ENCODE measurements at regions of chr16 and their contacts with region 1.

Region 1: DNA sequence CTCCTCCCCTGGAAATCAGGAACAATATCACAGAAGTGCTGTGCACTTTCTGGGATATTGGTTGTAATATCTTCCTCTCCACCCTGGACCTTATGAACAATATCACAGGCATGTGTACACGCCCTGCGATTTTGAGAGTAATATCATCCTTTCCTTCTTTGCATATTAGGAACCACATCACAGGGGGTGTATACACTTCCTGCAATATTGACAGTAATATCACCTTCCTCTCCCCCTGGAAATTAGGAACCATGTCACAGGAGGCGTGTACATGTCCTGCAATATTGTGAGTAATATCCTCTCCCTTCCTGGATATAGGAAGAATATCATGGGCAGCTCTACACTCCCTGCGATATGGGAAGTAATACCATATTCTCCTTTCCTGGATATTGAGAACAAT is 14.2 kb upstream of the TEKT5 start:
- DNase-seq: no peak
- H3K4me3 ChIP-seq: no peak overlapping the region
- H3K27ac ChIP-seq: no peak overlapping the region
- H3K4me1 ChIP-seq: no peaks in the 10 kb centered on the region
- H3K27me3 ChIP-seq: no peaks in the 10 kb centered on the region
- CTCF ChIP-seq: no peak
- EP300 ChIP-seq: no peak
- POLR2A ChIP-seq: no peak

Region 2: DNA sequence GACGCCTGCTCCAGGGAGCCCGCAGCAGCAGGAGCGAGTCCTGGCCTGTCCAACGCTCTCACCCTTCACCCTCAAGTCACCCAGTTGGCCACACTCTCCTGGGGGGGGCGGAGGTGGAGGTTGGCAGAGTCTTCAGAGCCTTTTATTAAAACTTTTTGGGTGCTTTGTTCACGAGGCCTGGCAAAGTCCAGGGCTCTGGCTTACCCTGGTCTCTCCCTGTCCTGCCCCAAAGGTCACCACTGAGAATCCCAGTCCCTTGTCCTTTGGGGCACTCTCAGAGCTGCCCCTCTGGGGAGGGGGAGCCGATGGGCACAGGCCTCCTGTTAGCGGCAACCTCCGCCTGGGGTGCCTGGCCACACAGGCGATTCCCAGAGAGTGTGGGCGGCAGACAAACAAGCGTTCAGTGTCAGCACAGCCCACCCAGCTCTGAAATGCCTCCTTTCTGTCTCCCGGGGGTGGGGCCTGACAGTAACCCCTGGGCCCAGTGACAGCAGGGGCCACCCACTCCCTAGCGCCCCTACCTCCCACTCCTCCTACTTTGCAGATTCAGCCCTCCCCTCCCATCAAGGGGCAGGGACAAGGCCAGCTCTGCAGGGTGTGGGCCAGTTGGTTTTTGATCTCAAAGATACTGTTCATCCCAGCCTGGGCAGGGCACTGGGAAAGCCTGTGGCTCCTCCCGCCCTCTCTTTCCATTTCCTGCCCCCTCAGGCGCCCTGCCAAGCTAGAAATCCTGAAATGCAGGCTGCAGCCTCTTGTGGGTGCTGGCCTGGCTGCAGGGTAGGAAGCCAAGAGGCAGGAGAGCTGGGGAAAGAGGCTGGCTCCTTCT is 92.0 kb before region 1 on chr16:
- intact Hi-C with region 1: loop called in 1 of 4 experiments (anchors 10 kb)
- DNase-seq: peak; percentile 37 to 62 (median 59)
- H3K4me3 ChIP-seq: no peak overlapping the region
- H3K27ac ChIP-seq: no peak overlapping the region
- H3K4me1 ChIP-seq: peaks cover 6% of the 10 kb centered on the region
- H3K27me3 ChIP-seq: no peaks in the 10 kb centered on the region
- CTCF ChIP-seq: no peak
- EP300 ChIP-seq: no peak
- POLR2A ChIP-seq: no peak

Region 3: DNA sequence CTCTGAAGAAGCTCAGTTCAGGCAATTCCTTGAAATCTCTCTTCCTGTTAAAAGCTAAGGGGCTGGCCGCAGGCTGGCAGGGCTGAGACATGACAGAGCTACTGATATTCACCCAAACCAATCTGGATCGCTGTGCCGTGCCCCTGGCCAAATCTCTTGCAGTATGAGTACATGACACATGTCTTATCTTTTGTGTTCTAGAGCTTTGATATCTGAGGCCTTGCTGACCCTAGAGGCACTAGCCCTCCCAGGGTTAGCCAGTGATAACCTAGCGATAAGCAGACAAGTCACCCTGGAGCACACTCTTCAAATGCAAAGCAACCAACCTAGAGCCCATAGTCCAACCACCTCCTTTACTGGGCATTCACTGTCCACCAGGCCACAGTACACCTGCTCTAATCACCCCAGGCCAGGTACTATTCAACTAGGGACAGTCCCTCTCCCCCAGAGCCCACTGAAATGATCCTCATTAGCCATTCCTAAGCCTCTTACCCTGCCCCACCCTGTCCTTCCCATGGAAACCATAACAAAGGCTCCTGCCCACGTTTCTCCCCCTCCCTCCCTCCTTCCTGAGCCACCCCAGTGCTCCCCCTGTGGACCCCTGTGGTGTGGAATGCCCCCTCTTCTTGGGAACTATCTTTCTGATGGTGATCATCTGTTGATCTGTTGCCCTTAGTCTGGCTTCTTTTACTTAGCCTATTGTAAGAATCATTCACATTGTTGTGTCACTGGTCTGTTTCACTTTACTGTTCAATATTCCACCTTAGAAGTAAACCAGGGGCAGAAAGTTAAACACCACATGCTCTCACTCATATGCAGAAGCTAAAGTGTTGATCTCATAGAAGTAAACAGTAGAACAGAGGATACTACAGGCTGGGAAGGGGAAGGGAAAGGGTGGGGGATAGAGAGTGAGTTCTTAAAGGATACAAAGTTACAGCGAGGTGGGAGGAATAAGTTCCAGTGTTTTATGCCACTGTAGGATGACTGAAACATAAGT is 66.7 kb before region 1 on chr16:
- intact Hi-C with region 1: loop called in 1 of 4 experiments (anchors 10 kb)
- DNase-seq: no peak
- H3K4me3 ChIP-seq: no peak overlapping the region
- H3K27ac ChIP-seq: no peak overlapping the region
- H3K4me1 ChIP-seq: no peaks in the 10 kb centered on the region
- H3K27me3 ChIP-seq: no peaks in the 10 kb centered on the region
- CTCF ChIP-seq: no peak
- EP300 ChIP-seq: no peak
- POLR2A ChIP-seq: no peak

Measured in ovary (tissue), 10 donors.